ENCODE measurements at regions of chr4 and their contacts with region 1.

Region 1: DNA sequence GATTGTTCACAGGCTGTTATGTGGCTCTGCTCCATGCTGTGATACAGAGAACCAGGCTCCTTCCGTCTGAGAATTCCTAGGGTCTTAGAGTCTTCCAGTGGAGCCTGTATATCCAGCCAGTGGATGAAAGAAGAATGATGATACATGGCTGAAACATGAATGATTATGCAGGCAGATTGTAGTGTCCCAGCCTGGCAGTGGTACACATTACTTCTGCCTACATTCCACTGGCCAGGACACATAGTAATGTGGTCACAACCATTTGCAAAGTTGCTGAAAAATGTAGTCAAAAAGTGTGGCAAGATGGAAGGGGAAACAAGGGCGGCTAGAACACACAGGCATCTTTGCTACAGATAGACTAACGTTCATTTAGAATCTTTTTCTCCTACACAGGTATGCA is 4.5 kb upstream of the GBA3 start:
- DNase-seq: no peak
- ATAC-seq: no peak
- H3K4me3 ChIP-seq: no peak overlapping the region
- H3K27ac ChIP-seq: no peak overlapping the region
- H3K4me1 ChIP-seq: no peaks in the 10 kb centered on the region
- H3K27me3 ChIP-seq: no peaks in the 10 kb centered on the region
- CTCF ChIP-seq: no peak

Region 2: GRCh38 chr4:22410645-22411247 is 277.5 kb before region 1 on chr4:
- intact Hi-C with region 1: loop called (anchors 5 kb)
- DNase-seq: no peak
- ATAC-seq: no peak
- H3K4me3 ChIP-seq: no peak overlapping the region
- H3K27ac ChIP-seq: no peak overlapping the region
- H3K4me1 ChIP-seq: no peaks in the 10 kb centered on the region
- H3K27me3 ChIP-seq: no peaks in the 10 kb centered on the region
- CTCF ChIP-seq: peak; percentile 61

Measured in lower lobe of right lung (tissue), 2 donors.